ENCODE measurements at regions of chr2 and their contacts with region 1.

Region 1: GRCh38 chr2:25479761-25480160 is 138.0 kb upstream of the DNMT3A start:
- DNase-seq: peak; percentile 9
- H3K4me3 ChIP-seq: no peak overlapping the region
- H3K27ac ChIP-seq: no peak overlapping the region
- H3K4me1 ChIP-seq: peaks cover 22% of the 10 kb centered on the region
- H3K27me3 ChIP-seq: no peaks in the 10 kb centered on the region
- CTCF ChIP-seq: no peak

Region 2: GRCh38 chr2:25431604-25432003 is 48.2 kb before region 1 on chr2:
- CTCF ChIA-PET with region 1: no interaction called
- dilution Hi-C with region 1: loop called (anchors 5 kb)
- in situ Hi-C with region 1: no loop called
- intact Hi-C with region 1: no loop called
- DNase-seq: no peak
- H3K4me3 ChIP-seq: no peak overlapping the region
- H3K27ac ChIP-seq: no peak overlapping the region
- H3K4me1 ChIP-seq: no peaks in the 10 kb centered on the region
- H3K27me3 ChIP-seq: no peaks in the 10 kb centered on the region
- CTCF ChIP-seq: no peak